Activated CD4-positive, alpha-beta T cell treated with anti-CD3 and anti-CD28 coated beads, Interleukin-2, amount 10 ng/mL, durations not matched to agents 24 days and 14 days (primary cell): ENCODE measurements at regions of chr5 and their contacts with region 1.

Region 1: GRCh38 chr5:43120720-43121564 is at the start of gene ZNF131:
- DNase-seq: peak; percentile 99
- H3K4me3 Mint-ChIP-seq: peak within 1 kb of the TSS; percentile 90
- H3K27ac Mint-ChIP-seq: peak within 1 kb of the TSS; percentile 97
- H3K4me1 Mint-ChIP-seq: peaks cover 25% of the 10 kb centered on the region
- H3K27me3 Mint-ChIP-seq: peaks cover 2% of the 10 kb centered on the region
- total RNA-seq, gene ZNF131: 37.9 and 40.1 TPM in 2 replicates

Region 2: GRCh38 chr5:42950440-42951292 is 170.3 kb before region 1 on chr5:
- intact Hi-C with region 1: loop called (anchors 5 kb)
- DNase-seq: peak; percentile 89
- H3K4me3 Mint-ChIP-seq: peak overlapping the region; percentile 95
- H3K27ac Mint-ChIP-seq: peak overlapping the region; percentile 100
- H3K4me1 Mint-ChIP-seq: peaks cover 37% of the 10 kb centered on the region
- H3K27me3 Mint-ChIP-seq: peaks cover 5% of the 10 kb centered on the region

Region 3: GRCh38 chr5:43008369-43009153 is 112.4 kb before region 1 on chr5:
- intact Hi-C with region 1: loop called (anchors 5 kb)
- DNase-seq: peak; percentile 96
- H3K4me3 Mint-ChIP-seq: peak overlapping the region; percentile 88
- H3K27ac Mint-ChIP-seq: peak overlapping the region; percentile 95
- H3K4me1 Mint-ChIP-seq: peaks cover 36% of the 10 kb centered on the region
- H3K27me3 Mint-ChIP-seq: no peaks in the 10 kb centered on the region

Region 4: GRCh38 chr5:43105369-43106289 is 15.3 kb before region 1 on chr5:
- intact Hi-C with region 1: loop called (anchors 1 kb)
- DNase-seq: peak; percentile 96
- H3K4me3 Mint-ChIP-seq: peak overlapping the region; percentile 87
- H3K27ac Mint-ChIP-seq: peak overlapping the region; percentile 90
- H3K4me1 Mint-ChIP-seq: peaks cover 39% of the 10 kb centered on the region
- H3K27me3 Mint-ChIP-seq: no peaks in the 10 kb centered on the region

Region 5: GRCh38 chr5:43191740-43192557 is 71.0 kb after region 1 on chr5 and contains the start of gene NIM1K:
- intact Hi-C with region 1: loop called (anchors 1 kb)
- DNase-seq: peak; percentile 85
- H3K4me3 Mint-ChIP-seq: peak within 1 kb of the TSS; percentile 86
- H3K27ac Mint-ChIP-seq: peak within 1 kb of the TSS; percentile 86
- H3K4me1 Mint-ChIP-seq: peaks cover 31% of the 10 kb centered on the region
- H3K27me3 Mint-ChIP-seq: peaks cover 15% of the 10 kb centered on the region
- total RNA-seq, gene NIM1K: 0.82 and 0.97 TPM in 2 replicates

Region 6: DNA sequence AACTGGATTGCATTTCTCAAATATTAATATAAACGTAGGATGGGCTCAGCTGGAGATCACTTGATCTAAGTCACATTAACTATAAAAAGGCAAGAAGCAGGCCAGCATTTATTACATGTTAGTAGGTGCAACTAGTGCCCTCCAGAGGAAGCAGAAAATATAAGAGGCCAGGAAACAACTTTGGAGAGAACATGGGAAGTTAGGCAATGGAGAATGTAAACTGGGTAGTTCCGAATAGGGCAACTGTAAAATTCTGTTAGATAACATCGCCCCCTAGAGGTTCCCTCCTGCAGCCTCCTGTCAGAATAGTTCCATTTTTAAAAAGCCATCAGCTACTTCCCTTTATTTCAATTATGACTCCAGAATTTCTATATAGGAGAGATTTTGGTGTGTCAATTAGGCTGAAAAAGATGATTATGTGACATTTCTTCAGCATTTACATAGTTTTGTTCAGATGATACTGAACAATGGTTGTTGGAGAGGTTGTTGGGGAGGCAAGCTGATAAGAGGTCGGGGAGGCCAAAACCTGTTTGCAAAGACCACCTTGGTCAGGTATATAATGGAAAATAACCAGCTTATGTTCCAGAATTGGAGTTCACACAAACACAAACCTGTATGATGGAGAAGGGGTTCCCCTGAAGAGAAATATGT is 268.9 kb after region 1 on chr5:
- intact Hi-C with region 1: loop called (anchors 5 kb)
- DNase-seq: peak; percentile 86
- H3K4me3 Mint-ChIP-seq: no peak overlapping the region
- H3K27ac Mint-ChIP-seq: no peak overlapping the region
- H3K4me1 Mint-ChIP-seq: peaks cover 26% of the 10 kb centered on the region
- H3K27me3 Mint-ChIP-seq: no peaks in the 10 kb centered on the region

Region 7: GRCh38 chr5:43514816-43515677 is 394.1 kb after region 1 on chr5 and contains the start of gene C5orf34:
- intact Hi-C with region 1: loop called (anchors 1 kb)
- DNase-seq: peak; percentile 98
- H3K4me3 Mint-ChIP-seq: peak within 1 kb of the TSS; percentile 95
- H3K27ac Mint-ChIP-seq: peak within 1 kb of the TSS; percentile 96
- H3K4me1 Mint-ChIP-seq: peaks cover 23% of the 10 kb centered on the region
- H3K27me3 Mint-ChIP-seq: no peaks in the 10 kb centered on the region
- total RNA-seq, gene C5orf34: 6.8 and 8.7 TPM in 2 replicates